ENCODE measurements at regions of chr12 and their contacts with region 1.

Region 1: DNA sequence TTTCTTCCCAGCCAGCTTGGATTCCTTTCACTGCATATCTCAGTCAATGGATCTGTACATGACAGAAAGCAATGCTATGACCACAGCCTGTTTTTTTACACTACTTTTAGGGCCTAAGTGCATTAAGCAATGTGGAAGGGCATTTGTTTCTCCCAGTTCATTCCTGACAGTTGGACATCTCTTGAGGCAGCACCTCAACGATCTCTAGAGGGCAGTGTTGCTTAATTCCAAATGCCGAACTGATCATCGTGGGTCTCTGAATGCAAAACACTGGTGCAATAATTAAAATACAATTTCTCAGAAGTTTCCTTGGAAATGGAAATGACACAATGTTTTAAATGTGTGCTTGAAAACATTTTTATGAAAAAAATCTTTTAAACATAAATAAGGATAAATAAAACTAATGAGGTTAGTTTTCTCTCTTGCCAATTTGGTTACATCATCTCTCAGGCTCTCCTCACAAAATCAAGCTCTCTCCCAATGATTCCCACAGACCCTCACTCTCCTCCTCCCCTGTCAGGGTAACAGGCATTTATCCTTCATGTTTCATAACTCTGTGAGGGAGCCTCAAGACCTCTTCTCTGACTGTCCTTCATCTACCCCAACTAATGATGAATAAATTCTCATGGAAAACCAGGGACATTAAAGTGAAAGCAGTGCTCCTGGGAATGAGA is 192.4 kb upstream of the SLC16A7 start:
- DNase-seq: peak; percentile 70
- H3K4me3 ChIP-seq: peak overlapping the region in 1 of 3 experiments; percentile 20
- H3K27ac ChIP-seq: no peak overlapping the region
- H3K4me1 ChIP-seq: peaks cover 6% of the 10 kb centered on the region
- H3K27me3 ChIP-seq: no peaks in the 10 kb centered on the region
- CTCF ChIP-seq: peak; percentile 74 to 79
- POLR2A ChIP-seq: no peak

Region 2: GRCh38 chr12:59414051-59414450 is 10.7 kb after region 1 on chr12:
- CTCF ChIA-PET with region 1: interaction called, 16 read pairs
- POLR2A ChIA-PET with region 1: no interaction called
- dilution Hi-C with region 1: no loop called
- intact Hi-C with region 1: no loop called
- DNase-seq: no peak
- H3K4me3 ChIP-seq: no peak overlapping the region
- H3K27ac ChIP-seq: no peak overlapping the region
- H3K4me1 ChIP-seq: no peaks in the 10 kb centered on the region
- H3K27me3 ChIP-seq: no peaks in the 10 kb centered on the region
- CTCF ChIP-seq: no peak
- POLR2A ChIP-seq: no peak

Region 3: DNA sequence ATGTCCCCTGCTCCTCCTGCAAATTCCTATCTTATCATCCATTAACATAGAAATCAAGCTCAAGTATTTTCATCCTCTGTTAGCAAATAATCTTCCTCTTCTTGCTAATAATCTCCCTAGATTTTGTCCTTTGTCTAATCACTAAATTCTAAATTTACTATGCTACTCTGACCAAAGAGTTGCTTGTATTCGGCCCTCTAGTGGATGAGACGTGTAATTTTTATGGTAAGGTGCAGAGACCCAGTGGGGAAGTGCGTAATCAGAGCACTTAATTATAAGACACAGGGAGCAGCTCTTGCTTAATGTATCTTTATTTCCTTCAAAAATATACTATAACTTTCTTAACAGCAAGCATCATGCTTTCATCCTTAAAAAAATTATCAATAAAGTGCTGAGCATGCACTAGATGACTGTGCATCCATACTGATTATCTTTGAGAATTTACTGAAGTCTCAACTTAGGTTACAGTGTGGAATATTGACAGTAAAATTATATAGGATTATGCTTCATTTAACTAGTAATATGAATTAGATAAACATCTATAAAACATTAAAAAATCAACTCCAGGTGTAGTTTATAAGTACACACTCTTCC is 405.0 kb after region 1 on chr12:
- CTCF ChIA-PET with region 1: interaction called, 16 read pairs
- POLR2A ChIA-PET with region 1: no interaction called
- dilution Hi-C with region 1: no loop called
- intact Hi-C with region 1: loop called (anchors 1 kb)
- DNase-seq: peak; percentile 54
- H3K4me3 ChIP-seq: no peak overlapping the region
- H3K27ac ChIP-seq: no peak overlapping the region
- H3K4me1 ChIP-seq: no peaks in the 10 kb centered on the region
- H3K27me3 ChIP-seq: no peaks in the 10 kb centered on the region
- CTCF ChIP-seq: peak; percentile 54 to 59
- POLR2A ChIP-seq: no peak

Region 4: GRCh38 chr12:60257063-60257462 is 853.7 kb after region 1 on chr12:
- CTCF ChIA-PET with region 1: interaction called, 9 read pairs
- POLR2A ChIA-PET with region 1: no interaction called
- dilution Hi-C with region 1: no loop called
- intact Hi-C with region 1: loop called (anchors 5 kb)
- DNase-seq: peak; percentile 82
- H3K4me3 ChIP-seq: no peak overlapping the region
- H3K27ac ChIP-seq: no peak overlapping the region
- H3K4me1 ChIP-seq: no peaks in the 10 kb centered on the region
- H3K27me3 ChIP-seq: no peaks in the 10 kb centered on the region
- CTCF ChIP-seq: peak; percentile 14 to 33
- POLR2A ChIP-seq: no peak

Measured in endothelial cell of umbilical vein (primary cell).